Right ventricle myocardium inferior (tissue), 1 donor: ENCODE measurements at regions of chr2 and their contacts with region 1.

Region 1: GRCh38 chr2:100909534-100910081 is 89.7 kb downstream of the NPAS2 start:
- DNase-seq: no peak
- ATAC-seq: no peak

Region 2: GRCh38 chr2:100845141-100845991 is 64.2 kb before region 1 on chr2:
- intact Hi-C with region 1: loop called (anchors 1 kb)
- DNase-seq: no peak
- ATAC-seq: peak; percentile 89

Region 3: DNA sequence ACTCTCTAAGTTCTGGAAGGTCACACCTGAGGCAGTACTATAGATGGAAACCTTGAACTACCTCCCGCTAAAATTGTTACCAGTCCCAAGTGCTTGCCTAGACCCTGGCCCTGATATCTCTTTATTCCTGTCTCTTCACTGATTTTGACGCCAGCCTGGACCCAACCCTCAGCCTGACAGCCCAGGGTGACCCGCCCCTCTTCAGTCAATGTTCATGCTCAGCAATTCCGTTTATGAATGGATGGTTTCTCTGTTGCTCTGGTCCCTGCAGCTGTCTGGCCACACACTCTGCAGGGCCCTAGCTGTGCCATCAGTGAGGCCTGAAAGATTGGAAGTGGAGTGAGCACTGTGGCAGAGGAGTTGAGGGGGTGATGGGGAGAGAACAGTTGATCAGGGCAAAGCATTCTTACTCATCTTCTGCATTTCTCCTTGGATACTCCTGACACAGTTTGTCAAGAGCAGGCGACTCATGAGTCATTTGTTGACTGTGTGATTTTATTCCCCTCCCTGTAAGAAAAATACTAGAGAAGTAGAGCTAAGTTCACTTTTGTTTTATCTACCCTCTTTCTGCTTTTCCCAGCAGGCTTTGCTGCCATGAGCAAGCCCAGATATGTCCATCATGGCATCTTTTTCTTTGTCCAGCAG is 43.7 kb before region 1 on chr2:
- intact Hi-C with region 1: no loop called
- DNase-seq: no peak
- ATAC-seq: no peak

Region 4: DNA sequence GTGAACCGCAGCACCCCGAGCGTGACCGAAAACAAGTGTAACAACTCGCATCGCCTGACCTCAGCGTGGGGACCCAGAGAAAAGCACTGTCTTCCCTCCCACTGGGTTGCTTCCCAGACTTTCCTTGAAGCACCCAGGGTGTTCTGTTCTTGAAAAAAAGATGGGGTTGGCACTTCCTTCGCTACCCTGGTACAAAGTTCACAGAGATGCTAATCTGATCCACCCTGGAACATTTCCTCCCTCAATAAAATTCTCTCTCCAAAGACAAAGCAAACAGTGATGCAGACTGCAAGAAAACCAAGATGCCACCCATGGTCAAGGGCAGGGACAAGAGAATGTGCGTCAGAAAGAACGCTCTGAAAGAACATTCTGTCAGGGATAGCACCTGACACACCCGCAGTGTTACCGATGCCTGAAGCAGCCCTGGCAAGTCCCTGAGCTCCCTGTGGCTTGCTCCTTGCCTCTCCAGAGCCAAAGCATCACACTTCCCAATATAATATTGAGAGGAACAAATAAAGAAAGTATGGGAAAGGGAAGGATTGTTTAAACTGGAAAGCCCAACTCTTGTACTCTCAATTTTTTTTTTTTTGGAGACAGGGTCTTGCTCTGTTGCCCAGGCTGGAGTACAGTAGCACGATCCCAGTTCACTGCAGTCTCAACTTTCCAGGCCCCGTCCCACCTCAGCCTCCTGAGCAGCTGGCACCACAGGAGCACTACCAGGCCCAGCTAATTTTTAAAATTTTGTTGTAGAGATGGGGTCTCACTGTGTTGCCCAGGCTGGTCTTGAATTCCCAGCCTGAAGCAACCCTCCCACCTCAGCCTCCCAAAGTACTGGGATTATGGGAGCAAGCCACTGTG is 170.8 kb after region 1 on chr2:
- intact Hi-C with region 1: no loop called
- DNase-seq: no peak
- ATAC-seq: no peak

Region 5: GRCh38 chr2:101109451-101110118 is 200.0 kb after region 1 on chr2:
- intact Hi-C with region 1: no loop called
- DNase-seq: no peak
- ATAC-seq: peak; percentile 51